Heart left ventricle (tissue), 16 donors: ENCODE measurements at regions of chr5 and their contacts with region 1.

Region 1: GRCh38 chr5:71461360-71461759 is 5.9 kb downstream of the BDP1 start:
- DNase-seq: no peak
- ATAC-seq: no peak
- H3K4me3 ChIP-seq: no peak overlapping the region
- H3K27ac ChIP-seq: no peak overlapping the region
- H3K4me1 ChIP-seq: peaks cover 4 to 19% (median 16%) of the 10 kb centered on the region in 12 donors
- H3K27me3 ChIP-seq: no peaks in the 10 kb centered on the region
- CTCF ChIP-seq: no peak
- POLR2A ChIP-seq: no peak

Region 2: DNA sequence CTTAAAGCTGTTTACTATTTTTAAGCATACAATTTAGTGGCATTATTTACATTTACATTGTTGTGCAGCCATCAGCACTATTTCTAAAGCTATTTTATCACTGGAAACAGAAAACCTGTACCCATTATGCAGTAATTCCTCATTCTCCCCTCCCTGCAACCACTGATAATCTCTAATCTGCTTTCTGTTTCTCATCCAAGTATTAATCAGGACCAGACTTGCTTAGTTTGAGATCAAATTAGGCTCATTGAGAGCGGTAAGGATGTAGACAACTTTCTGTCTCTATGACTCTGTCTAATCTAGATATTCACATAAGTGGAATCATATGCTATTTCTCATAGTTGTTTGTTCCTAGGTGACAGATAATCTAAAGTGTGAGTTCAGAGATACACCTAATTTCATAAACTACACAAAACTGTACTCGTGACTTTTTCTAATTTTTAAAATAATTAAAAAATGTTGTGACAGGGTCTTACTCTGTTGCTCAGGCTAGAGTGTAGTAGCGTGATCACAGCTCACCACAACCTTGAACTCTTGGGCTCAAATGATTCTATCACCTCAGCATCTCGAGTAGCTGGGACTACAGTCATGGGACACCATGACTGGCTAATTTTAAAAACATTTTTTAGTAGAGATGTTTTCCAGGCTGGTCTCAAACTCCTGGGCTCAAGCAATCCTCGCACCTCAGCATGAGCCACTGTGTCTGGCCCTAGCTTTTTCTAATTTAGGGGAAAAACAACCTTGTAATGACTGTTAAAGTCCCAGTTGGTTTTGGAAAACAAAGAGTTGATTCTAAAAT is 31.7 kb after region 1 on chr5:
- intact Hi-C with region 1: loop called in 1 of 10 experiments (anchors 5 kb)
- DNase-seq: no peak
- ATAC-seq: no peak
- H3K4me3 ChIP-seq: no peak overlapping the region
- H3K27ac ChIP-seq: no peak overlapping the region
- H3K4me1 ChIP-seq: no peaks in the 10 kb centered on the region
- H3K27me3 ChIP-seq: no peaks in the 10 kb centered on the region
- CTCF ChIP-seq: no peak
- POLR2A ChIP-seq: no peak

Region 3: GRCh38 chr5:71522151-71522550 is 60.8 kb after region 1 on chr5:
- intact Hi-C with region 1: loop called in 2 of 10 experiments (anchors 10 kb)
- DNase-seq: no peak
- ATAC-seq: no peak
- H3K4me3 ChIP-seq: no peak overlapping the region
- H3K27ac ChIP-seq: no peak overlapping the region
- H3K4me1 ChIP-seq: no peaks in the 10 kb centered on the region
- H3K27me3 ChIP-seq: no peaks in the 10 kb centered on the region
- CTCF ChIP-seq: no peak
- POLR2A ChIP-seq: no peak

Region 4: GRCh38 chr5:71533614-71534013 is 72.3 kb after region 1 on chr5:
- intact Hi-C with region 1: loop called in 1 of 10 experiments (anchors 10 kb)
- DNase-seq: no peak
- ATAC-seq: peak; percentile 67 to 84 (median 82)
- H3K4me3 ChIP-seq: peak overlapping the region in 1 of 12 donors; percentile 7
- H3K27ac ChIP-seq: peak overlapping the region in 4 of 12 donors; percentile 21 to 74 (median 28)
- H3K4me1 ChIP-seq: peaks cover 0 to 13% (median 0%) of the 10 kb centered on the region in 12 donors
- H3K27me3 ChIP-seq: no peaks in the 10 kb centered on the region
- CTCF ChIP-seq: no peak
- POLR2A ChIP-seq: no peak

Region 5: DNA sequence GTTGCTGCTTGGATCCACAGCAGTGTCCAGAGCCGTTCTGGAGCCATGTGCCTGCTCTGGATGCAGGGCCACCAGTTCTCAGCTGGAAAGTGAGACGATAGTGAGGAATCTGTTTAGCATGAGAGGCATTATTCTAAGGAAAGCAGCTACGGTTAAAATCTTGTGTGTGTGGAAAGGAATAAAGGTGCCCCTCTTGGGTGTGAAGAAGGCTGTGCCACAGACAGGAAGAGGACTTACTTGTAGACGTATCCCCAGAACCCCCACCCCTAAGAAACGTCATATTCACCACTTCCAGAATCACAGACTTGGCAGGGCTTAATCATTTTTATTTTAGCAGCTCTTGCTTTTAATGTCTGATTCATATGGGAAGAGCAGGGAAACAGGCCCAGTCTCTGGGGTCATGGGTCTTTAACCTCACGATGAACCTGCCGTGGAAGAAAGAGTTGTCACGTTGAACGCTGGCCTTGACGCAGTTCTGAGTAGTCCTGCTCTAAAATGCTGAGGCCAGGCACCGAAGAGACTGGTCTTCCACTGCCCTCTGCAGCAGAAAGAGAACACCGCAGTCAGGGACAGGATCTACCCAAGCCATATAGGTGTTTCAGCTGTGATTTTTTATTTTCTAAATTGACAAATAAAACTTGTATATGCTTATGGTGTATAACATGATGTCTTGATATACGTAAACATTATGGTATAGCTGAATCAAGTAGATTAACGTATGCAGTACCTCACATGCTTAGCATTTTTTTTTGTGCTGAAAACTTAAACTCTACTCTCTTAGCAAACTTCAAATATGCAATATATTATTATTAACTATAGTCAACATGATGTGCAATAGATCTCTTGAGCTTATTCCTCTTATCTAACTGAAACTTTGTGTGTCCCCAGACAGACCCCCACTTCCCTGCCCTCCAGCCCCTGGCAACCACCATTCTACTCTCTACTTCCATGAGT is 296.5 kb after region 1 on chr5:
- intact Hi-C with region 1: loop called in 1 of 10 experiments (anchors 5 kb)
- DNase-seq: peak; percentile 50 to 66 (median 54)
- ATAC-seq: peak; percentile 88 to 100 (median 98)
- H3K4me3 ChIP-seq: peak overlapping the region in 8 of 12 donors; percentile 16 to 39 (median 23)
- H3K27ac ChIP-seq: peak overlapping the region in 1 of 12 donors; percentile 39
- H3K4me1 ChIP-seq: peaks cover 0 to 5% (median 0%) of the 10 kb centered on the region in 12 donors
- H3K27me3 ChIP-seq: no peaks in the 10 kb centered on the region
- CTCF ChIP-seq: peak; percentile 57 to 77 (median 67)
- POLR2A ChIP-seq: no peak